OCI-LY7 (cell line): ENCODE measurements at regions of chr9 and their contacts with region 1.

Region 1: DNA sequence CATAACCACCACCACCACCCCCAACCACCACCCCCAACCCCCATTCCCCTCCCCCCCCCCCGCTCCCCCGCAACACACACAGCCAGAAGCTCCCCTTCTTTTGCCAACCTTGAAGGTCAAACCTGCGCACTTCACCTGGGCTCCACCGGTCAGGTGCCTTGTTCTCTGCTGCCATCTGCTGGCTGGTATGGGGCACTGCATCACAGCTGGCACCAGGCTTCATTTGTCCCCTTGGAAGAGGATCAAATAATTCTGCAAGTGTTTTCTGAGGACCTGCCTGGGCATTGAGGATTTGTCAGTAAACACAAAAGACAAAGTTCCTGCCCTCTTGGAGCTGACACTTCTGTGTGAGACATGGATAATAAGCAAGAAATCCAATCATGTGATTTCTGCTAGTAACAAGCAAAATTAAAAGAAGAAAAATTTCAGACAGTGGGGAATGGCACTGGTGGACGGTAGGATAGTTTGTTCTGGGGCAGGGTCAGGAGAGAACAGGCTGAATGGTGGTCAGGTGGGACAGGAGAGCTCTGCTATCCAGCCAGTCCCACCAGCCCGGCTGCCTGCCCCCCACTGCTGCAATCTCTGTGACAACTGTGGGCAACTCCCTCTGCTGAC is 55.6 kb upstream of the LMX1B start:
- DNase-seq: peak; percentile 67
- H3K4me3 ChIP-seq: no peak overlapping the region
- H3K27ac ChIP-seq: no peak overlapping the region
- H3K4me1 ChIP-seq: peaks cover 3% of the 10 kb centered on the region
- CTCF ChIP-seq: peak; percentile 87

Region 2: GRCh38 chr9:126500684-126501382 is 57.3 kb before region 1 on chr9:
- CTCF ChIA-PET with region 1: interaction called, 4 read pairs
- POLR2A ChIA-PET with region 1: interaction called, 4 read pairs
- intact Hi-C with region 1: loop called (anchors 1 kb)
- DNase-seq: peak; percentile 69
- H3K4me3 ChIP-seq: no peak overlapping the region
- H3K27ac ChIP-seq: no peak overlapping the region
- H3K4me1 ChIP-seq: peaks cover 5% of the 10 kb centered on the region
- CTCF ChIP-seq: peak; percentile 92

Region 3: GRCh38 chr9:126578029-126578428 is 19.9 kb after region 1 on chr9:
- CTCF ChIA-PET with region 1: no interaction called
- POLR2A ChIA-PET with region 1: no interaction called
- intact Hi-C with region 1: no loop called
- DNase-seq: no peak
- H3K4me3 ChIP-seq: no peak overlapping the region
- H3K27ac ChIP-seq: no peak overlapping the region
- H3K4me1 ChIP-seq: no peaks in the 10 kb centered on the region
- CTCF ChIP-seq: no peak